Activated naive CD4-positive, alpha-beta T cell treated with anti-CD3 and anti-CD28 coated beads for 36 hours (primary cell): ENCODE measurements at regions of chr3 and their contacts with region 1.

Region 1: GRCh38 chr3:179071550-179072397 is at the start of gene ZMAT3:
- DNase-seq: peak; percentile 86
- H3K4me3 Mint-ChIP-seq: peak within 1 kb of the TSS; percentile 99
- H3K27ac Mint-ChIP-seq: peak within 1 kb of the TSS; percentile 89
- H3K4me1 Mint-ChIP-seq: peaks cover 42% of the 10 kb centered on the region
- H3K27me3 Mint-ChIP-seq: no peaks in the 10 kb centered on the region
- total RNA-seq, gene ZMAT3: 26.9 to 28.3 TPM

Region 2: DNA sequence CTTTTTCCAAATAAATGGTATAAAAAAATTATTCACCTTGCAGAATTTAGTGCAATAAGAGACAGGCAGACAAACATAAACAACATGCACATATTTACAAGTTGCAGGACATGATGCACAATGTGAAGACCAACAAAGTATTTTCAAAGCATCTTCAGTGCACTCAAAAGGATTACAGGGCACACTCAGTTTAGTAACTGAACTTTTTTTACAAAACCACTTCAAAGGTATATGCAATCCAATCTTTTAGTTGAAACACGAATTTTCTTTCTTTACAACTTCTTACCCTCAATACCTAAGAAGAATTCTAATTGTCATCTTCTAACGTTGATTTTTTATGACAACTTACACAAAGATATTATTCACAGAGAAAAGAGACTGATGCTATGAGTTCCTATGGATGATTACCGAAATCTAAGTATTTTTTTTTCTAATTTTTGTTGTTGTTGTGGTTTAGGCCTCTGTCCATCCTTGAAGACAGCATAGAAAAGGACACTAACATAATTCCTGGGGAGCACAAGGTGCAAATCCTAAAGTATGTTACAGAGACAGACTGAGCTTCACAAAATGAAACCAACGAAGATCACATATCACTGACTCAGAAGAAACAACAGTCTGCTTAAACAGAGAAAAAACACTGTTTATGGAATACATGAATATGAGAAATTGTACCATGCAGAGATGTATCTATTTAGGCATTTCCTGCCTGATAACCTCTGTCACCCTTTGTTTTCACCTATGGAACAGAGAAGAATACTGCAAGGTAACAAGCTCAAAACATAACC is 50.5 kb before region 1 on chr3:
- CTCF ChIA-PET with region 1: interaction called, 17 read pairs
- intact Hi-C with region 1: loop called (anchors 1 kb)
- DNase-seq: no peak
- H3K4me3 Mint-ChIP-seq: peak overlapping the region; percentile 37
- H3K27ac Mint-ChIP-seq: peak overlapping the region; percentile 27
- H3K4me1 Mint-ChIP-seq: peaks cover 39% of the 10 kb centered on the region
- H3K27me3 Mint-ChIP-seq: no peaks in the 10 kb centered on the region

Region 3: GRCh38 chr3:179088306-179088705 is 16.5 kb after region 1 on chr3:
- CTCF ChIA-PET with region 1: interaction called, 3 read pairs
- intact Hi-C with region 1: loop called (anchors 2 kb)
- DNase-seq: no peak
- H3K4me3 Mint-ChIP-seq: no peak overlapping the region
- H3K27ac Mint-ChIP-seq: no peak overlapping the region
- H3K4me1 Mint-ChIP-seq: peaks cover 15% of the 10 kb centered on the region
- H3K27me3 Mint-ChIP-seq: no peaks in the 10 kb centered on the region

Region 4: GRCh38 chr3:179133575-179133974 is 61.8 kb after region 1 on chr3:
- CTCF ChIA-PET with region 1: no interaction called
- intact Hi-C with region 1: no loop called
- DNase-seq: no peak
- H3K4me3 Mint-ChIP-seq: no peak overlapping the region
- H3K27ac Mint-ChIP-seq: no peak overlapping the region
- H3K4me1 Mint-ChIP-seq: no peaks in the 10 kb centered on the region
- H3K27me3 Mint-ChIP-seq: peaks cover 3% of the 10 kb centered on the region

Region 5: DNA sequence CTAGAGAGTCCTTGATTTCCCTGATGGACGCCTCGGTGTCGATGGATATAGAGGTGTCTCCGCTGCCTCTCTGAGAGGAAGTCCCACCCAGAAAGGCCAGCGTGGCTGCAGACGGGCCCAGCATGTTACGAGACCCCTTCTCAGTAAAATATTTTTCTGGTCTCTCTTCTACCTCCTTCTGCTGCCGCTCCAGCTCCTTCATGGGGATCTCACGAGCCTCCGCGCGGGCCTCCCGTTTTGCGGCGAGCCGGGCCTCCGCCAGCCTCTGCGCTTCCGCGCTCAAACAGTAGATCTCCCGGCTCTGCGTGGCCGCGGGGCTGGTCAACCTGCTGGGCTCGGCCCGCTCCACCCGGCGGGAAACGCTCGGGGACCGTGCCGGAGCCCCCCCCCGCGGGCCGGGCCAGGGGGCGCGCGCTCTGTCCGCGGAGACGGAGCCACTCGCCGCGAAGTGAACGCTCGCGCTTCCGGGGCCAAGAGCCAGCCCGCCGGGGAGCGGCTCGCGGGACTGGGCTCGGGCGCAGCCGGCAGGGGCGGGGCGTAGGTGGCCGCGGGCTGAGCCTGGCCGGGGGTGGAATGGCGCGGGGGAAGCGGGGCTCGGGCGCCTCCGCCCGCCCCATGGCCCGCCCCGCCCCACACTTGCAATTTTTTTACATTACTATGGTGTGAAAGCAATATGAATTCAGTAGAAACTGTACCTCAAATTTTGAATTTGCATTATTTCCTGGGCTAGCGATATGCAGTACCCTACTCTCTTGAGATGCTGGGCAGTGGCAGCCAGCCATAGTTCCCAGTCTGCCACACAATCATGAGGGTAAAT is 189.4 kb after region 1 on chr3:
- CTCF ChIA-PET with region 1: no interaction called
- intact Hi-C with region 1: loop called (anchors 2 kb)
- DNase-seq: peak; percentile 69
- H3K4me3 Mint-ChIP-seq: peak overlapping the region; percentile 63
- H3K27ac Mint-ChIP-seq: no peak overlapping the region
- H3K4me1 Mint-ChIP-seq: peaks cover 12% of the 10 kb centered on the region
- H3K27me3 Mint-ChIP-seq: peaks cover 2% of the 10 kb centered on the region

Region 6: GRCh38 chr3:179347345-179348194 is 275.8 kb after region 1 on chr3 and contains the start of gene MFN1:
- CTCF ChIA-PET with region 1: no interaction called
- intact Hi-C with region 1: loop called (anchors 1 kb)
- DNase-seq: peak; percentile 94
- H3K4me3 Mint-ChIP-seq: peak within 1 kb of the TSS; percentile 91
- H3K27ac Mint-ChIP-seq: peak within 1 kb of the TSS; percentile 91
- H3K4me1 Mint-ChIP-seq: peaks cover 13% of the 10 kb centered on the region
- H3K27me3 Mint-ChIP-seq: no peaks in the 10 kb centered on the region
- total RNA-seq, gene MFN1: 23.0 to 23.1 TPM